HepG2 (cell line): ENCODE measurements at regions of chr11 and their contacts with region 1.

Region 1: DNA sequence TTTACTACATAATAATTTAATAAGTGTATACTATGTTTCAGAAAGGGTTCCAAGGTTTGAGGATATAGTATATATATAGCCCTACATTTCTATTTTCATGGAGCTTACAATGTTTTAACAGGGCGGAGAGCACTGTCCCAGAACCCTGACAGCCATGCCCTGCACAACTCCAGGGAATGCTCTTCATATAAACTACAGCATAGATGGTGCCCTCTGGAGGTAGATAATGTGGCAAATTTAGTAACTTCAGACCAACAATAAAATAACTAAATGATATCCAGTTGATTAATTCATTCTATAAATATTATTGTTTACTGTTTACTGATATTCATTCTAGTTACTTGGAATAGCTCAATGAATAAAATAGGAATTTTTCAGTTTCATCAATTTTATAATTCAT is 693.7 kb upstream of the CCDC179 start:
- DNase-seq: peak; percentile 2
- ATAC-seq: no peak
- H3K4me3 ChIP-seq: no peak overlapping the region
- H3K27ac ChIP-seq: no peak overlapping the region
- H3K4me1 ChIP-seq: no peaks in the 10 kb centered on the region
- H3K27me3 ChIP-seq: no peaks in the 10 kb centered on the region
- CTCF ChIP-seq: no peak
- EP300 ChIP-seq: no peak
- POLR2A ChIP-seq: no peak
- RAD21 ChIP-seq: no peak

Region 2: GRCh38 chr11:23112987-23113886 is 440.8 kb before region 1 on chr11:
- CTCF ChIA-PET with region 1: no interaction called
- POLR2A ChIA-PET with region 1: no interaction called
- in situ Hi-C with region 1: no loop called
- intact Hi-C with region 1: loop called (anchors 1 kb)
- DNase-seq: peak; percentile 69
- ATAC-seq: peak; percentile 93
- H3K4me3 ChIP-seq: peak overlapping the region in 1 of 3 experiments; percentile 44; a peak in 2 of 6 replicates
- H3K27ac ChIP-seq: no peak overlapping the region
- H3K4me1 ChIP-seq: peaks cover 13% of the 10 kb centered on the region
- H3K27me3 ChIP-seq: no peaks in the 10 kb centered on the region
- CTCF ChIP-seq: peak; percentile 67
- EP300 ChIP-seq: peak in 1 of 2 experiments; percentile 45; a peak in 2 of 4 replicates
- POLR2A ChIP-seq: no peak
- RAD21 ChIP-seq: peak; percentile 37; the same call in 1 of the 2 replicates

Region 3: DNA sequence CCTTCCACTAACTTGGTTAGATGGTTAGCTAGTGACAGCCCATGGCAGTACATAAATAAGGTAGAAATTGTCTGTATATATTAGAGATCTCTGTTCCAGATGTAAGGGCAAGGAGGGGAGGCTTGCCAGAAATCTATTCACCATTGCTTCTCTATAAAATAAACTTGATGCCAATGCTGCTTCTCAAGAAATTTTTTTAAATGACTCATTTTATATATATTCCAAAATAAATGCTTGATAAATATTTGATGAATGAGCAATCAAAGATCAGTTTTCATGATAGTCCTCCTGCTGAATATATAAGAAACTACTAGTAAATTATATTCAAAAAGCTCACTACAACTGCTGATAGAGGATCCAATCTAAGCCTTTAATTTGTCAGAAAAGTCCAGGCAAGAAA is 16.8 kb after region 1 on chr11:
- CTCF ChIA-PET with region 1: no interaction called
- POLR2A ChIA-PET with region 1: no interaction called
- in situ Hi-C with region 1: no loop called
- intact Hi-C with region 1: no loop called
- DNase-seq: no peak
- ATAC-seq: no peak
- H3K4me3 ChIP-seq: no peak overlapping the region
- H3K27ac ChIP-seq: no peak overlapping the region
- H3K4me1 ChIP-seq: no peaks in the 10 kb centered on the region
- H3K27me3 ChIP-seq: no peaks in the 10 kb centered on the region
- CTCF ChIP-seq: no peak
- EP300 ChIP-seq: no peak
- POLR2A ChIP-seq: no peak
- RAD21 ChIP-seq: no peak

Region 4: DNA sequence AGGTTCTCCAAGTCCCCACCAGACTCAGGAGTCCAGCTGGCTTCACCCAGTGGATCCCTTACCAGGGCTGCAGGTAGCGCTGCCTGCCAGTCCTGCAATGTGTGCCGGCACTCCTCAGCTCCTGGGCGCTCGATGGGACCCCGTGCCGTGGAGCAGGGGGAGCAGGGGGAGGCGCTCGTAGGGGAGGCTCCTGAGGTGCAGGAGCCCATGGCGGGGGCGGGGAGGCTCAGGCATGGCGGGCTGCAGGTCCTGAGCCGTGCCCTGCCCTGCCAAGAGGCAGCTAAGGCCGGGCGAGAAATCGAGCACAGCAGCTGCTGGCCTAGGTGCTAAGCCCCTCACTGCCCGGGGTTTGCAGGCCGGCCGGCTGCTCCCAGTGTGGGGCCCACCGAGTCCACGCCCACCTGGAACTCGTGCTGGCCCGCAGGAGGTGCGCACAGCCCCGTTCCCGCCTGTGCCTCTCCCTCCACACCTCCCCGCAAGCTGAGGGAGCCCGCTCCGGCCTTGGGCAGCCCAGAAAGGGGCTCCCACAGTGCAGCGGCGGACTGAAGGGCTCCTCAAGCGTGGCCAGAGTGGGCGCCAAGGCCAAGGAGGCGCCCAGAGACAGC is 99.2 kb after region 1 on chr11:
- CTCF ChIA-PET with region 1: no interaction called
- POLR2A ChIA-PET with region 1: no interaction called
- in situ Hi-C with region 1: no loop called
- intact Hi-C with region 1: no loop called
- DNase-seq: no peak
- ATAC-seq: no peak
- H3K4me3 ChIP-seq: no peak overlapping the region
- H3K27ac ChIP-seq: no peak overlapping the region
- H3K4me1 ChIP-seq: no peaks in the 10 kb centered on the region
- H3K27me3 ChIP-seq: no peaks in the 10 kb centered on the region
- CTCF ChIP-seq: no peak
- EP300 ChIP-seq: no peak
- POLR2A ChIP-seq: no peak
- RAD21 ChIP-seq: no peak